ENCODE measurements at regions of chr7 and their contacts with region 1.

Region 1: DNA sequence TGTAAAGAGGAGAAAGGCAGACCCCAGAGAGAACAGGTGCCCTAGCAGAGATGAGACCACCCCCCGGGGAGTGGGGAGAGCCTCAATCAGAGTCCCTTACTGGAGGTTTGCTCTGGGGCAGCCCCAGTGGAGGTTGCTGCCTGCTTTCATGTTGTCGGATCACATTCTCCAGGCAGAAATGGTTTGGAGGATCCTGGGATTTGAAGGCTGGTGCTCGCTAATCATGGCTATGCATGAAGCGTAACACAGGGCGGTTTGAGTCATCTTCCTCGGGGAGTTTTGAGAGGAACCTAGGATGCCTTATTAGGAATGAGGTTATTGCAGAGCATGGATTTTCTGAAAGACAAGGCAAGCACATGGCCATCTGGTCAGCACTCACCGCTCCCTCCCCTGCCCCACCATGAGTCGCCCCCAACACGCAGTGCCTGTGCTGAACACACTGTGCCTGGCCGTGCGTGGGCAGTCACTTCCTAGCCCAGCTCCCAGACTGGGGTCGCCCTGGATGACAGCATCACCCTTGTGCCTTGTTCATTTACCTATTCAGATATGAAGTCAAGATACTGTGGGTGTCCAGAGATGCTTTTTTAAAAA is 319.9 kb downstream of the DPP6 start:
- DNase-seq: no peak
- H3K4me3 ChIP-seq: no peak overlapping the region
- H3K27ac ChIP-seq: no peak overlapping the region
- H3K4me1 ChIP-seq: no peaks in the 10 kb centered on the region
- H3K27me3 ChIP-seq: no peaks in the 10 kb centered on the region
- CTCF ChIP-seq: no peak
- EP300 ChIP-seq: no peak
- POLR2A ChIP-seq: no peak

Region 2: GRCh38 chr7:154186811-154187210 is 185.3 kb before region 1 on chr7:
- intact Hi-C with region 1: loop called in 1 of 4 experiments (anchors 5 kb)
- DNase-seq: no peak
- H3K4me3 ChIP-seq: no peak overlapping the region
- H3K27ac ChIP-seq: no peak overlapping the region
- H3K4me1 ChIP-seq: no peaks in the 10 kb centered on the region
- H3K27me3 ChIP-seq: no peaks in the 10 kb centered on the region
- CTCF ChIP-seq: no peak
- EP300 ChIP-seq: no peak
- POLR2A ChIP-seq: no peak

Region 3: DNA sequence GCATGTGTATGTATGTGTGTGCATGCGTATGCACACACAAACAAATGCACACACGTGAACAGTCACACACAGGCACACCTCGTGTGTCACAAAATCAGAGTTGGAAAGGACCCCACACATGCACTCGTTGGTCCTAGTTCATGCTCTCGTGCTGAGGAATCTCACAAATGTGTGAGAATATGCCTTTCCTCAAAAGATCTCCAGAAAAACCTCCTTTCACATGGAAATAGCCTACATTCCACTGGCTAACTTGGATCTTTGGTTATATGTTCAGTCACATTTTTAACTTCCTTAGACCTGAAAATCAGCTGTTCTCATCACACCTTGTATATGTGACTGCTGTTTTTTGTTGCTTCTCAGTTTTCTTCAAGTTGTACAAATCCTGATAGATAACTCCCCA is 63.2 kb before region 1 on chr7:
- intact Hi-C with region 1: no loop called
- DNase-seq: no peak
- H3K4me3 ChIP-seq: no peak overlapping the region
- H3K27ac ChIP-seq: no peak overlapping the region
- H3K4me1 ChIP-seq: no peaks in the 10 kb centered on the region
- H3K27me3 ChIP-seq: no peaks in the 10 kb centered on the region
- CTCF ChIP-seq: no peak
- EP300 ChIP-seq: no peak
- POLR2A ChIP-seq: no peak

Region 4: GRCh38 chr7:154415709-154416399 is 43.7 kb after region 1 on chr7:
- intact Hi-C with region 1: loop called in 1 of 4 experiments (anchors 2 kb)
- DNase-seq: no peak
- H3K4me3 ChIP-seq: no peak overlapping the region
- H3K27ac ChIP-seq: no peak overlapping the region
- H3K4me1 ChIP-seq: no peaks in the 10 kb centered on the region
- H3K27me3 ChIP-seq: no peaks in the 10 kb centered on the region
- CTCF ChIP-seq: no peak
- EP300 ChIP-seq: no peak
- POLR2A ChIP-seq: no peak